ENCODE measurements at regions of chr12 and their contacts with region 1.

Region 1: GRCh38 chr12:29187756-29188155 is 38.7 kb downstream of the FAR2 start:
- DNase-seq: no peak
- H3K4me3 ChIP-seq: no peak overlapping the region
- H3K27ac ChIP-seq: no peak overlapping the region
- H3K4me1 ChIP-seq: 0 out of 2 replicates have a peak, but pooled peaks cover 3% of the 10 kb centered on the region
- H3K27me3 ChIP-seq: no peaks in the 10 kb centered on the region
- CTCF ChIP-seq: no peak

Region 2: DNA sequence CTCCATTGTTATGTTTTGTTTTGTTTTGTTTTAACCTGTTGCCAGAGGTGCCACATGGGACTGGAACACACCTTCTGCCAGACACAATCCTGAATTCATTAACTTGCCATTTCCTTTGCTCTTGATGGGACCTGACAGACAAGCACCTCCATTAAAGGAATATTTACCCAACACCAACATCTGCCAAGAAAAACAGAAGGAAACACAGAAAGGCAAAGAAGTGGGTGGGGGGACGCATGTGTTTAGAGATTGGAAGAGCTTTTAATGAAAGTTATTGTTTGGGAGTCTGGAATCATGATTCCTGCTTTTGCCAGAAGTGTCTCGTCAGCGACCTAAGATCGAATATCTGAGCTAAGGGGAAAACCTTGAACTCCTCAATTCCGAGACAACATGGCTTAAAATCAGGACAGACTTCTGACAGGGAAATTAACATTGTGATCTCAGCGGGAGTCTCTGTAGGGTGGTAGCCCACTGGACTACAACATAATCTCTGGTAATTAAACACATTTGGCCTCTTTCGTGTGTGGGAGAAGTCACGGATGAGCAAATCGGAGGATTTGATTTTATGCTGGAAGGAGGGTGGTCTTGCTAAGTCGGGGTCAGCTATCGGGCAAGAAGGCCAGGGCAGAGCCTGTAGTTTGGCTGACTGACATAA is 249.0 kb before region 1 on chr12:
- CTCF ChIA-PET with region 1: no interaction called
- POLR2A ChIA-PET with region 1: no interaction called
- intact Hi-C with region 1: no loop called
- DNase-seq: no peak
- H3K4me3 ChIP-seq: no peak overlapping the region
- H3K27ac ChIP-seq: no peak overlapping the region
- H3K4me1 ChIP-seq: 0 out of 2 replicates have a peak, but pooled peaks cover 8% of the 10 kb centered on the region
- H3K27me3 ChIP-seq: no peaks in the 10 kb centered on the region
- CTCF ChIP-seq: no peak

Region 3: DNA sequence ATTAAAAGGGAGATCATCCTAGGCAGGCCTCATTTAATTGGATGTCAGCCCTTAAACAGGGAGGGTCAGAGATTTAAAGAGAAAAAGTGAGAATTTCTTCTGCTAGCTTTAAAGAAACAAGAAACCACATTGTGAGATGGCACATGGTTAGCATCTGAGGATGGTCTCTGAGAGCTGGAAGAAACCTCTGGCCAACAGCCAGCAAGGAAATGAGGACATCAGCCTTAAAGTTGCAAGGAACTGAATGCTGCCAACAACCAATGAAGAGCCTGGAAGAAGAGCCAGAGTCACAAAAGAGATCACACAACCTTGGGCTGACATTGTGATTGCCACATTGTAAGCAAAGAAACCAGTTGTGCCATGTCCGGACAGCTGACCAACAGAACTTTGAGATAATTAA is 56.2 kb before region 1 on chr12:
- CTCF ChIA-PET with region 1: no interaction called
- POLR2A ChIA-PET with region 1: interaction called, 19 read pairs
- intact Hi-C with region 1: no loop called
- DNase-seq: no peak
- H3K4me3 ChIP-seq: no peak overlapping the region
- H3K27ac ChIP-seq: no peak overlapping the region
- H3K4me1 ChIP-seq: no peaks in the 10 kb centered on the region
- H3K27me3 ChIP-seq: no peaks in the 10 kb centered on the region
- CTCF ChIP-seq: no peak